ENCODE measurements at regions of chr2 and their contacts with region 1.

Region 1: DNA sequence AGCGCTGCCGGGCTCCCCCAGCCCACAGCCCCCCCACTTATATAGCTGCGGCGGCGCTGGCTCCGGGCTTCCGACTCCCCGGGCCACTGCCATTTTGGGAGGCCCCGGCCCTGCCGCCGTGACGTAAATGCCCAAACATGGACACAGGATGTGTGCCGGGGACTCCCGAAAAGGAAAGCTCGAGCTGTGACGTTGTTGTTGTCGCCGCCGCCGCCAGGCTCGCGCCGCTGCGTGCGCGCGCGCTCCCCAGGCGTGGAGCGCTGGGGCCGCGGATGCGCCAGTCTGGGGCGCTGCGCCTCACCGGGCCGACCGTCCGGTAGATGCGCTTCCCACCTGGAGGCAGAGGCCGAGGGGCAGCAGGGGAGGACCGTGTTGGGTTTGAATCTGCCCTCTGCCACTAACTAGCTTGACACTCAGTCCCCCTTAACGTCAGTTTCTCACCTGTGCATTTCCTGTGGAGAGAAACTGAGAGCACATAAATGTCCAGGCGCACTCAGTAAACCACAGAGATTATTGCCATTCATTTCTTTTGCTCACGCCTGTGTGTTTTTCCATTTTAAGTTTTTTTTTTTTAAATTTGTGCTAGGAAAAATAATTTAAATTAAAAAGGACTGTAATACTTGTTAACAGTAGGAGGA is at the start of gene EGR4:
- DNase-seq: peak; percentile 74 to 96 (median 84)
- ATAC-seq: peak; percentile 92
- H3K4me3 ChIP-seq: peak within 1 kb of the TSS; percentile 51 to 73
- H3K4me3 Mint-ChIP-seq: peak within 1 kb of the TSS; percentile 78
- H3K27ac ChIP-seq: no peak within 1 kb of the TSS
- H3K27ac Mint-ChIP-seq: no peak within 1 kb of the TSS
- H3K4me1 ChIP-seq: peaks cover 26% of the 10 kb centered on the region
- H3K4me1 Mint-ChIP-seq: peaks cover 14% of the 10 kb centered on the region
- H3K27me3 ChIP-seq: peaks cover 35 to 37% of the 10 kb centered on the region in 2 experiments
- H3K27me3 Mint-ChIP-seq: peaks cover 62% of the 10 kb centered on the region
- CTCF ChIP-seq: no peak
- total RNA-seq, gene EGR4: 0.14 to 0.22 TPM

Region 2: GRCh38 chr2:72999729-73000725 is 293.6 kb before region 1 on chr2:
- CTCF ChIA-PET with region 1: no interaction called
- POLR2A ChIA-PET with region 1: no interaction called
- intact Hi-C with region 1: no loop called
- DNase-seq: peak in 1 of 9 experiments; percentile 27
- ATAC-seq: no peak
- H3K4me3 ChIP-seq: no peak overlapping the region
- H3K4me3 Mint-ChIP-seq: no peak overlapping the region
- H3K27ac ChIP-seq: no peak overlapping the region
- H3K27ac Mint-ChIP-seq: no peak overlapping the region
- H3K4me1 ChIP-seq: no peaks in the 10 kb centered on the region
- H3K4me1 Mint-ChIP-seq: no peaks in the 10 kb centered on the region
- H3K27me3 ChIP-seq: no peaks in the 10 kb centered on the region
- H3K27me3 Mint-ChIP-seq: no peaks in the 10 kb centered on the region
- CTCF ChIP-seq: no peak

Region 3: DNA sequence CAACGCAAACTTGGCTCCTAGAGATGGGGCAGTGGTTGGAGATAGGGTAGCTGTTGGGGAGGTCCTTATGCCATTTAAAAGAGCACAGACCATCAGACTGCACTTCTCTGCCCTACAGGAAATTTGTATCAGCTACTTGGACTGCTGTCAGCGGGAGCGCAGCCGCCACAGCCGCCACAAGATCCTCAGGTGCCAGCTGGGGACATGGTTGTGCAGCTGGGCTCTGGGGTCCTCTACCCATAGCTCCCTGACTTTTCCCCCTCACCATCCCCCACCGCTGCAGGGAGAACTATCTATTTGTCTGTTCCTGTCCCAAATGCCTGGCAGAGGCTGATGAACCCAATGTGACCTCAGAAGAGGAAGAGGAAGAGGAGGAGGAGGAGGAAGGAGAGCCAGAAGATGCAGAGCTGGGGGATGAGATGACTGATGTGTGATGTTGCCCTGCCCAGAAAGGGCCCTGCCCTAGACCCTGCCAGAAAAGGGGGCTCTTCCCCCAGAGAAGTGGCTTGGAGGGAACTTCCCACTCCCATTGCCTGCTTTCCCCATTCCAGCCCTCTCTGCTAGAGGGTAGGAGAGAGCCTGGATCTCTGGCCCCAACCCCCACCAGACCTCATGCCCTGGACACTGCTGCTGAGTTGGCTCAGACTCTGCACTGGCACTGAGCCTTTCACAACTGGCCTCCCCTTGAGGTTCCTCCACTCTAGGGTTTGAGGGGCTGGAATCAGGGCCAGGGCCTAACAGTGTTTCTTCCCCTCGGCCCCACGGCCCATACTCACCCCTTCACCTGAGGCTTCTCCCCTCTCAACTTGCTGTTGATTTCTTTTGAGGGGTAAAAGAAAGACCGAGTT is 67.9 kb before region 1 on chr2:
- CTCF ChIA-PET with region 1: interaction called, 10 read pairs
- POLR2A ChIA-PET with region 1: no interaction called
- intact Hi-C with region 1: no loop called
- DNase-seq: no peak
- ATAC-seq: no peak
- H3K4me3 ChIP-seq: no peak overlapping the region
- H3K4me3 Mint-ChIP-seq: no peak overlapping the region
- H3K27ac ChIP-seq: no peak overlapping the region
- H3K27ac Mint-ChIP-seq: no peak overlapping the region
- H3K4me1 ChIP-seq: no peaks in the 10 kb centered on the region
- H3K4me1 Mint-ChIP-seq: no peaks in the 10 kb centered on the region
- H3K27me3 ChIP-seq: no peaks in the 10 kb centered on the region
- H3K27me3 Mint-ChIP-seq: no peaks in the 10 kb centered on the region
- CTCF ChIP-seq: no peak

Region 4: GRCh38 chr2:73314441-73314840 is 20.8 kb after region 1 on chr2:
- CTCF ChIA-PET with region 1: no interaction called
- POLR2A ChIA-PET with region 1: no interaction called
- intact Hi-C with region 1: no loop called
- DNase-seq: no peak
- ATAC-seq: no peak
- H3K4me3 ChIP-seq: no peak overlapping the region
- H3K4me3 Mint-ChIP-seq: no peak overlapping the region
- H3K27ac ChIP-seq: no peak overlapping the region
- H3K27ac Mint-ChIP-seq: no peak overlapping the region
- H3K4me1 ChIP-seq: no peaks in the 10 kb centered on the region
- H3K4me1 Mint-ChIP-seq: no peaks in the 10 kb centered on the region
- H3K27me3 ChIP-seq: peaks cover 0 to 3% of the 10 kb centered on the region in 2 experiments
- H3K27me3 Mint-ChIP-seq: peaks cover 16% of the 10 kb centered on the region
- CTCF ChIP-seq: no peak

Measured in CD8-positive, alpha-beta T cell (primary cell).